T-cell (primary cell): ENCODE measurements at regions of chr17 and their contacts with region 1.

Region 1: GRCh38 chr17:30336369-30337171 is 2.7 kb upstream of the TMIGD1 start:
- DNase-seq: peak in 33 of 35 experiments; percentile 15 to 83 (median 46)
- ATAC-seq: peak; percentile 32 to 52 (median 43)
- H3K4me3 ChIP-seq: no peak overlapping the region
- H3K4me3 Mint-ChIP-seq: no peak overlapping the region
- H3K27ac ChIP-seq: no peak overlapping the region
- H3K27ac Mint-ChIP-seq: no peak overlapping the region
- H3K4me1 ChIP-seq: peaks cover 12 to 18% of the 10 kb centered on the region in 2 experiments
- H3K4me1 Mint-ChIP-seq: peaks cover 38 to 47% (median 44%) of the 10 kb centered on the region in 3 donors
- H3K27me3 ChIP-seq: no peaks in the 10 kb centered on the region
- H3K27me3 Mint-ChIP-seq: no peaks in the 10 kb centered on the region

Region 2: GRCh38 chr17:30252940-30253717 is 83.4 kb before region 1 on chr17:
- CTCF ChIA-PET with region 1: interaction called, 3 to 13 read pairs
- POLR2A ChIA-PET with region 1: no interaction called
- DNase-seq: no peak
- ATAC-seq: no peak
- H3K4me3 ChIP-seq: no peak overlapping the region
- H3K4me3 Mint-ChIP-seq: no peak overlapping the region
- H3K27ac ChIP-seq: no peak overlapping the region
- H3K27ac Mint-ChIP-seq: no peak overlapping the region
- H3K4me1 ChIP-seq: no peaks in the 10 kb centered on the region
- H3K4me1 Mint-ChIP-seq: no peaks in the 10 kb centered on the region
- H3K27me3 ChIP-seq: no peaks in the 10 kb centered on the region
- H3K27me3 Mint-ChIP-seq: no peaks in the 10 kb centered on the region

Region 3: DNA sequence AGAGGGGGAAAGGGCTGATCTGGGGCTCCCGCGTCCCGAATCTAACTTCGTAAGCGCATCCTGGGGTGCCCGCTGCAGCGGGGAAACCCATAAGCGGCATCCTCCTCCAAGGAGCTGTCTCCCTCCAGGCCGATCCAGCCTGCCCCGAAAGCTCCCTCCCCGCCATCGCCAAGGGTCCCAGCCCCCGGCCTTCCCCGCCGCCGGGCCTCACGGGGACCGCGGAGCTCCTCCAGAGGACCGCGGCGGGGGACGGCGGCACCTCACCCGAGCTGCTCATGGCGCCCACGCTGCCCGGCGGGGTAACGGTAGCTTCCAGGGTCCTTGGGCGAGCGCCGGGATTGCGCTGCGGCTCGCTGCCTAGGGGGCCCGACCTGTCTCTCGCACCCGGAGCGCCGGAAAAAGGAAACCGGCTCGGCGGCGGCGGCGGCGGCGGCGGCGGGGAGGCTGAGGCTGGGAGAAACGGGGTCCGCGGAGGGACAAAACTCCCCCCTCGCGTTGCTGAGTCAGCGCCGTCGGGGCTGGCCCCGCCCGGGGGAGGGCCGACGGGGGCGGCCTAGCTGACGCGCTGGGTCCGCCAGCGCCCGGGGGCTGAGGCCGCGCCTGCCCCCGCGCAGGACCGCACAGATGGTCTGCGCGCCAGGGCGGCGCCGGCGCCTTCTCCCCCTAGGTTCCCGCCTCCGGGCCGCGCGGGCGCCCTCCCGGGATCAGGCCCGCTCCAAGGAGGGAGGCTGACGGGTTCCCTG is 44.9 kb before region 1 on chr17 and contains the start of gene BLMH:
- CTCF ChIA-PET with region 1: interaction called, 7 to 38 read pairs
- POLR2A ChIA-PET with region 1: interaction called in 1 of 2 experiments, 6 read pairs
- DNase-seq: peak; percentile 42 to 85 (median 63)
- ATAC-seq: peak; percentile 87 to 89 (median 88)
- H3K4me3 ChIP-seq: peak within 1 kb of the TSS; percentile 84 to 85
- H3K4me3 Mint-ChIP-seq: peak within 1 kb of the TSS in 2 of 3 donors; percentile 94 to 95
- H3K27ac ChIP-seq: peak within 1 kb of the TSS; percentile 58
- H3K27ac Mint-ChIP-seq: peak within 1 kb of the TSS; percentile 66 to 85
- H3K4me1 ChIP-seq: peaks cover 10 to 11% of the 10 kb centered on the region in 2 experiments
- H3K4me1 Mint-ChIP-seq: peaks cover 14 to 25% (median 24%) of the 10 kb centered on the region in 3 donors
- H3K27me3 ChIP-seq: no peaks in the 10 kb centered on the region
- H3K27me3 Mint-ChIP-seq: no peaks in the 10 kb centered on the region
- total RNA-seq, gene BLMH: 38.8 to 60.2 (median 47.4) TPM

Region 4: GRCh38 chr17:30323895-30324319 is 12.7 kb before region 1 on chr17:
- CTCF ChIA-PET with region 1: interaction called, 12 to 26 read pairs
- POLR2A ChIA-PET with region 1: interaction called, 3 to 8 read pairs
- DNase-seq: peak in 32 of 35 experiments; percentile 6 to 54 (median 25)
- ATAC-seq: peak; percentile 58 to 69 (median 64)
- H3K4me3 ChIP-seq: peak overlapping the region in 1 of 2 donors; percentile 11
- H3K4me3 Mint-ChIP-seq: peak overlapping the region; percentile 40 to 60 (median 42)
- H3K27ac ChIP-seq: peak overlapping the region; percentile 80
- H3K27ac Mint-ChIP-seq: peak overlapping the region; percentile 87 to 88
- H3K4me1 ChIP-seq: peaks cover 15 to 21% of the 10 kb centered on the region in 2 experiments
- H3K4me1 Mint-ChIP-seq: peaks cover 22 to 56% (median 28%) of the 10 kb centered on the region in 3 donors
- H3K27me3 ChIP-seq: no peaks in the 10 kb centered on the region
- H3K27me3 Mint-ChIP-seq: no peaks in the 10 kb centered on the region

Region 5: DNA sequence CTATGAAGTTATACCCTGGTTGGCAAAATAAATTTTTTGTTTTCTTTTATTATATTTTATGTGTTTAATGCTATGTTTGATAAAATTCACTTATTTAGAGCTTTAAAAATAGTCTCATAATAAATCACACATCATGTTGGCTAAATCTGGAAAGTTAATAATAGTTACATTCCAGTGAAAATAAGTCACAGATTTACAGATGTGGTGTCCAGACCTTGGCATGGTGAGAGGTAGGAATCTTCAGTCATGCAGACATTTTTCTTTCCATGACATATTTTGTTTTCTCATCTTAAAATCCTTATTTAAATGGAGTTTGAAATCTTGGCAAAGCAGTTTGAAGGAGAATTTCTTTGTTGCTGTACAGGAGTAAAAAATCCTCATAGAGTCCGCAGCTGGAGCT is 92.6 kb after region 1 on chr17:
- CTCF ChIA-PET with region 1: no interaction called
- POLR2A ChIA-PET with region 1: no interaction called
- DNase-seq: no peak
- ATAC-seq: no peak
- H3K4me3 ChIP-seq: no peak overlapping the region
- H3K4me3 Mint-ChIP-seq: no peak overlapping the region
- H3K27ac ChIP-seq: no peak overlapping the region
- H3K27ac Mint-ChIP-seq: no peak overlapping the region
- H3K4me1 ChIP-seq: no peaks in the 10 kb centered on the region
- H3K4me1 Mint-ChIP-seq: no peaks in the 10 kb centered on the region
- H3K27me3 ChIP-seq: no peaks in the 10 kb centered on the region
- H3K27me3 Mint-ChIP-seq: no peaks in the 10 kb centered on the region

Region 6: GRCh38 chr17:30576326-30576861 is 239.8 kb after region 1 on chr17:
- CTCF ChIA-PET with region 1: no interaction called
- POLR2A ChIA-PET with region 1: no interaction called
- DNase-seq: peak in 1 of 35 experiments; percentile 43
- ATAC-seq: peak in 1 of 4 experiments; percentile 35
- H3K4me3 ChIP-seq: no peak overlapping the region
- H3K4me3 Mint-ChIP-seq: peak overlapping the region in 1 of 3 donors; percentile 31
- H3K27ac ChIP-seq: no peak overlapping the region
- H3K27ac Mint-ChIP-seq: no peak overlapping the region
- H3K4me1 ChIP-seq: no peaks in the 10 kb centered on the region
- H3K4me1 Mint-ChIP-seq: no peaks in the 10 kb centered on the region
- H3K27me3 ChIP-seq: peaks cover 0 to 8% of the 10 kb centered on the region in 2 experiments
- H3K27me3 Mint-ChIP-seq: peaks cover 0 to 8% of the 10 kb centered on the region in 2 donors